IMR-90 (cell line): ENCODE measurements at regions of chr18 and their contacts with region 1.

Region 1: DNA sequence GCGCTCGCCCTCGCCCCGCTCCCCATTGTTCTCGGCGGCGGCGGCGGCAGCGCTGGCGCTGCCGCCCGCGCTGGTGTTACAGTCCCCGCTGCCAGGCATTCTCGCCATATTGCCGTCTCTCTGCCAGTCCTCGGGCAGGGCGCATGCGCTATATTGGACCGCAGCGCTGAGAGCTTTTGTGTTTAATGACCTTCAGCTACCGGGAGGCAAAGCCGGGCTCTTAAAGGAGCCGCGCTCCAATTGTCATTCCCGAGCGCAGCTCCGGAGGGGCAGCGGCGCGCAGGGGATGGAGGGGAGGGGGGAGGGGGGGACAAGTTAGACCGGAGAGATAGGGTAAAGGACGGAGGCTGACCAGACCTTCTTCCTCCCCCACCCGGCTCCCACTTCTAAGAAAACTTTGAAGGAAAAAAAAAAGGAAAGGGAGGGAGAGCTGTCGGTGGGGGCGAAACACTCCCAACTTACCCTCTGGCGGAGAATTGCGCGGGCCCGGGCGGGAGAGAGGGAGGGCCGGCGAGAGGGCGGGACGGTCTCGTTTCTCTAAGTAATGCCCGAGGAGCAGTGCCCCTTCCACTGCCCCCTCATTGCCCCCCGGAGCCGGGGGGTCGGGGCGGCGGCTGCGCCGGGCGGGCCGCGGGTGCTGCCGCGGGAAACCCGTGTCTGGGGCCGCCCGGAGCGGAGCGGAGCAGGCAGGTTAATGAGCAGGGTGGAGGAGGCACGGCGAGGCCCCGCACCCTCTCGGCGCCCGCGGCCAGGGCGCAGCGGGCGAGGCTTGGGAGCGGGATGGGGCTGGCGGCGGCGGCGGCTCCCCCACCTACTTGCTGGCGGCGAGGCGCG is at the start of gene KCTD1:
- DNase-seq: peak; percentile 84
- ATAC-seq: peak; percentile 68
- H3K4me3 ChIP-seq: peak within 1 kb of the TSS; percentile 69
- H3K27ac ChIP-seq: peak within 1 kb of the TSS; percentile 16; the same call in 1 of the 2 replicates
- H3K4me1 ChIP-seq: peaks cover 6% of the 10 kb centered on the region
- H3K27me3 ChIP-seq: peaks cover 35% of the 10 kb centered on the region
- CTCF ChIP-seq: no peak
- POLR2A ChIP-seq: no peak
- RAD21 ChIP-seq: no peak
- total RNA-seq, gene KCTD1: 4.7 and 5.0 TPM in 2 replicates

Region 2: DNA sequence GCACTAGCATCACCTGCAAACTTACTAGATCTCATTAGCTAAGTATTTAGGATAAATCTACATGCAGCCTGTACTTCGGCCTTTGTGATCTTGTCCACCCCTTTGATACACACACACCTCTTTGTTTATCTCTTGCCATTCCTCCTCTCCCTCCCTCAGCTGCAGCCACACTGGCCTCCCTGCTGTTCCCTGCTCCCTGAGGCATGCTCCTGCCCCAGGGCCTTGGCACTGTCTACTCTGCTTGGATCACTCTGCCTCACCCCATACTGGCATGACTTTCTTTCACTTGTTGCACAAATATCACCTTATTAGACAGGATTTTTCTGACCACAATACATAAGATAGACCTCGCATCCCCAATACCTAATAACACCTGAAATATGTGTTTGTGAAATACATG is 344.9 kb before region 1 on chr18:
- CTCF ChIA-PET with region 1: no interaction called
- POLR2A ChIA-PET with region 1: no interaction called
- dilution Hi-C with region 1: no loop called
- in situ Hi-C with region 1: no loop called
- intact Hi-C with region 1: no loop called
- DNase-seq: no peak
- ATAC-seq: no peak
- H3K4me3 ChIP-seq: no peak overlapping the region
- H3K27ac ChIP-seq: no peak overlapping the region
- H3K4me1 ChIP-seq: no peaks in the 10 kb centered on the region
- H3K27me3 ChIP-seq: no peaks in the 10 kb centered on the region; the same call in 1 of the 2 replicates
- CTCF ChIP-seq: no peak
- POLR2A ChIP-seq: no peak
- RAD21 ChIP-seq: no peak

Region 3: DNA sequence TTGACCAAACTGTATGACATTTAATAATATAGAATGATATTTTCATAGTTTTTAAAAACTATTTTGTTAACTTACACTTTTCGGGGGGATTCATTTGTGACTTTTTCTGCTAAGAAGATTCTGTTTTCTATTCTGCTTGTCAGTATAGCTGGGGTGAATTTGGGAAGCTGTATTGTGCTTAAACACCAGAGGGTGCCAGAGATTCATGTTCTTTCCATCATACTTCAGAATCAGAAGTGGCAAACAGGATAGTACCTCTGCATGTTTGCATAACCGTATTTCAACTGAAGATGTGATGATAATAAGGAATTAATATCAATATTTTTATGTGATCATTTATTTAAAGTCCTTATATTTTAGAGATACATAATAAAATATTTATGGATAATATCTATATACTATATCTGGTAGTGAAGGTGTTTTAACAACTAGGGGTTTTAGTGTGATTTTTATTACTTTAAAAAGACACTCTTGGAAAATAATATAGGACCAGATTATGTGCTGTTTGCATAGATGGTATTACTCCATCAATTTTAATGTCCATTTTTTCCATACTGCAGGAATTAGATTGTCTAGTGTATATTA is 241.4 kb before region 1 on chr18:
- CTCF ChIA-PET with region 1: no interaction called
- POLR2A ChIA-PET with region 1: no interaction called
- dilution Hi-C with region 1: no loop called
- in situ Hi-C with region 1: no loop called
- intact Hi-C with region 1: loop called (anchors 5 kb)
- DNase-seq: peak; percentile 63
- ATAC-seq: peak; percentile 90
- H3K4me3 ChIP-seq: no peak overlapping the region
- H3K27ac ChIP-seq: no peak overlapping the region
- H3K4me1 ChIP-seq: no peaks in the 10 kb centered on the region
- H3K27me3 ChIP-seq: no peaks in the 10 kb centered on the region
- CTCF ChIP-seq: peak; percentile 79
- POLR2A ChIP-seq: no peak
- RAD21 ChIP-seq: peak; percentile 79

Region 4: DNA sequence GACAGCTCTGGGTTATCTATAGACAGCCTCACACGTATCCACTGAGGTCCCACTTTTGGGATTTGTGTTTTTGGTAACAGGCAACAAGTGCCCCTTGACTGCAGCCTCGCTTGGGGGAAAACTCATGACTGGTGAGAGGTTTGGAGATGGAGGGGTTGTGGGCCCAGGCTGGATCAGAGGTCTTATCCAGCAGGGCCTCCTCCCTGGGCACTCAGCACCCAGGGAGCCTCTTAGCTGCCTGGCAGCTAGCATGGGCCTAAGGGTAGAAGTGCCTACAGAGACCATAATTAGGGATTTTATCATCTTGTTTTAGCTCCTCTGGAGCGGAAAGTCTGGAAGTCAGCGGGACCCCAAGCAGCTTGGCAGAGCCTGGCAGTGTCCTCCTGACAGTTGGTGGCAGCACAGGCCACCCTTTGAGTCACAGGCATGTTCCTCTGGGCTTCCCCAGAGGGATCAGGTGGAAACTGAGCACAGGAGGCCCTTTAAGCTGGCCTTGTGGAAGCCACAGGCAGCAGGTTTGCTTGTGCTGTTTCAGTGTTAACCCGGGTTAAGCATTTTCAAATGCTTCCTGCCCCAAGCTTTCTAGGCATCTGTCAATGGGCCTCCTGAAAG is 143.3 kb before region 1 on chr18:
- CTCF ChIA-PET with region 1: interaction called, 4 read pairs
- POLR2A ChIA-PET with region 1: no interaction called
- dilution Hi-C with region 1: no loop called
- in situ Hi-C with region 1: no loop called
- intact Hi-C with region 1: loop called (anchors 5 kb)
- DNase-seq: peak; percentile 53
- ATAC-seq: peak; percentile 87
- H3K4me3 ChIP-seq: no peak overlapping the region
- H3K27ac ChIP-seq: no peak overlapping the region
- H3K4me1 ChIP-seq: no peaks in the 10 kb centered on the region
- H3K27me3 ChIP-seq: peaks cover 15% of the 10 kb centered on the region
- CTCF ChIP-seq: peak; percentile 66
- POLR2A ChIP-seq: no peak
- RAD21 ChIP-seq: peak; percentile 82

Region 5: GRCh38 chr18:26470011-26470637 is 78.5 kb before region 1 on chr18:
- CTCF ChIA-PET with region 1: no interaction called
- POLR2A ChIA-PET with region 1: no interaction called
- dilution Hi-C with region 1: no loop called
- in situ Hi-C with region 1: no loop called
- intact Hi-C with region 1: loop called (anchors 2 kb)
- DNase-seq: peak; percentile 73
- ATAC-seq: no peak; the same call in 1 of the 2 replicates
- H3K4me3 ChIP-seq: no peak overlapping the region
- H3K27ac ChIP-seq: no peak overlapping the region
- H3K4me1 ChIP-seq: peaks cover 10% of the 10 kb centered on the region
- H3K27me3 ChIP-seq: no peaks in the 10 kb centered on the region
- CTCF ChIP-seq: no peak
- POLR2A ChIP-seq: no peak
- RAD21 ChIP-seq: no peak

Region 6: DNA sequence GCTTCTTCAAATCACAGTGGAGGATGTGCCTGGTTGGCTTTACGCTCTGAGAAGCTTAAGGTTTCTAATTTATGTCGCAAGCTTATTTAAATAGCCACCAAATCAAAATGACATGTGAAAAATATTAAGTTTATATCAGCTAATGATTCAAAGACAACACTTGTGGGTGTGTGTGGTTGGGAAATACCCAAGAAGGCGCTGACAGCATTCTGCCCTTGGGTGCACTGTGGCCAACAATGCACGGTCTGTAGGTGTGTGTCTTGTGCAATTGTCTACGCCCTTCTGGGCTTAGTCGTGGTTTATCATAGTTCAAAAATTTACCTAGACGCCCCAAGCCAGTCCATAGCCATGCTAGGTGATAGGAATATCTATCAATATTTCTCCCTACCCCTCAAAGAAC is 61.2 kb before region 1 on chr18:
- CTCF ChIA-PET with region 1: no interaction called
- POLR2A ChIA-PET with region 1: no interaction called
- dilution Hi-C with region 1: no loop called
- in situ Hi-C with region 1: loop called (anchors 10 kb)
- intact Hi-C with region 1: no loop called
- DNase-seq: no peak
- ATAC-seq: no peak
- H3K4me3 ChIP-seq: no peak overlapping the region
- H3K27ac ChIP-seq: no peak overlapping the region
- H3K4me1 ChIP-seq: peaks cover 5% of the 10 kb centered on the region
- H3K27me3 ChIP-seq: no peaks in the 10 kb centered on the region
- CTCF ChIP-seq: no peak
- POLR2A ChIP-seq: no peak
- RAD21 ChIP-seq: no peak

Region 7: GRCh38 chr18:26662996-26663395 is 114.3 kb after region 1 on chr18:
- CTCF ChIA-PET with region 1: no interaction called
- POLR2A ChIA-PET with region 1: no interaction called
- dilution Hi-C with region 1: no loop called
- in situ Hi-C with region 1: no loop called
- intact Hi-C with region 1: no loop called
- DNase-seq: no peak
- ATAC-seq: no peak
- H3K4me3 ChIP-seq: no peak overlapping the region
- H3K27ac ChIP-seq: no peak overlapping the region
- H3K4me1 ChIP-seq: no peaks in the 10 kb centered on the region
- H3K27me3 ChIP-seq: peaks cover 5% of the 10 kb centered on the region
- CTCF ChIP-seq: no peak
- POLR2A ChIP-seq: no peak
- RAD21 ChIP-seq: no peak

Region 8: DNA sequence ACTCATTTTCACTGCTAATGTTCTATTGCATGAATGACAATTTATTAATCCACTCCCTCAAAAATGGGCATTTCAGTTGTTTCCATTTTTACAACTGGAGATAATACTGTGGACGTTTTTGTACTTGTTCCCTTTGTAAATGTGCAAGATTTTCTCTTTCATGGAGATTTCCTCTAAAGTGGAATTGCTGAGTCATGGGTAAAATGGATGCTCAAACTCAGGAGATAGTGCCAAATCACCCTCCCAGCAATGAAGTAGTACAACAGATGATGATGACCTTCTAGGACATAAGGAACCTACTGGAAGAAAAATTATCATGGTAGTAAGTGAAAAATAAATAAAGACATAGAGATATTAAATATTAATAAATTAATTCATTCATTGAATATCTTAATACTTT is 1097.3 kb after region 1 on chr18:
- CTCF ChIA-PET with region 1: no interaction called
- POLR2A ChIA-PET with region 1: no interaction called
- dilution Hi-C with region 1: no loop called
- in situ Hi-C with region 1: no loop called
- intact Hi-C with region 1: no loop called
- DNase-seq: no peak
- ATAC-seq: no peak
- H3K4me3 ChIP-seq: no peak overlapping the region
- H3K27ac ChIP-seq: no peak overlapping the region
- H3K4me1 ChIP-seq: no peaks in the 10 kb centered on the region
- H3K27me3 ChIP-seq: no peaks in the 10 kb centered on the region
- CTCF ChIP-seq: no peak
- POLR2A ChIP-seq: no peak
- RAD21 ChIP-seq: no peak